ENCODE measurements at regions of chr18 and their contacts with region 1.

Region 1: DNA sequence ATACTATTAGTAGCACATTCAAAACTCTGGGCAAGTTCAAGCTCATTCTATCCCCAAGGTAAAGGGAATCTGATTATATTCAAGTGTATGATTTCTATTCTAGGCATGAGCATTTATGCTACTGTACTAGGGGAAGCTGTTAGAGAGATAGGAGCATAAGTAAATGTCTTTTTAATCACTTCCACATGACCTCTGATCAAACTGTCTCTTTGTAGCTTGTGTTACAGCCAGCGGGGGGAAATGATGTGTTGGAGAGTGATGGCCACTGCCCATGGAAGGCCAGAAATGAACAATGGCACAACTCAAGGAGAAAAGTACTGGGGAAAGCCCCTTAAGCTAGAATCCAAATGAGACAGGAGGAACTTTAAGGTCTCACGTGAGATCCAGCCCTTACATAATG is 894.9 kb upstream of the CDH2 start:
- DNase-seq: no peak
- H3K4me3 ChIP-seq: no peak overlapping the region
- H3K27ac ChIP-seq: no peak overlapping the region
- H3K4me1 ChIP-seq: no peaks in the 10 kb centered on the region
- H3K27me3 ChIP-seq: no peaks in the 10 kb centered on the region
- CTCF ChIP-seq: no peak

Region 2: DNA sequence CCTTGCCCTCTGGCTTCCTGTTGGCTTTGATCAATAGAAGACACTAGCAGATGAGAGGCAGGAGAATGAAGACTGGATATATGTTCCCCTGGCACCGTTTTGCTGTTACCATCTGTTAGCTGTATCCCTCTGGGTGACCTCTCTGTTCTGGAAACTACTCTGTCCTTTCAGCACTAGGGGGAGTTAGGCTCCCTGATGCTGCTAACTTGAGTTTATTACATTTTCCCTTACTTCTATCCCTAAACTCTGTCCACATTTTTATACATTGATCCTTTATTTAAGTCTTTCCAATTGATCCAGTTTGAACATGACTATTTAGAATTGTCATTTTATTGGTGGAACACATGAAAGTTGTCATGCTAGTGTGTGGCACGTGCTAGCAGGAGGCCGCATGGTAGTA is 119.4 kb after region 1 on chr18:
- CTCF ChIA-PET with region 1: no interaction called
- POLR2A ChIA-PET with region 1: interaction called, 10 read pairs
- intact Hi-C with region 1: no loop called
- DNase-seq: no peak
- H3K4me3 ChIP-seq: no peak overlapping the region
- H3K27ac ChIP-seq: no peak overlapping the region
- H3K4me1 ChIP-seq: peaks cover 10% of the 10 kb centered on the region; the same call in 1 of the 2 replicates
- H3K27me3 ChIP-seq: no peaks in the 10 kb centered on the region
- CTCF ChIP-seq: no peak